Psoas muscle (tissue), 8 donors: ENCODE measurements at regions of chr7 and their contacts with region 1.

Region 1: DNA sequence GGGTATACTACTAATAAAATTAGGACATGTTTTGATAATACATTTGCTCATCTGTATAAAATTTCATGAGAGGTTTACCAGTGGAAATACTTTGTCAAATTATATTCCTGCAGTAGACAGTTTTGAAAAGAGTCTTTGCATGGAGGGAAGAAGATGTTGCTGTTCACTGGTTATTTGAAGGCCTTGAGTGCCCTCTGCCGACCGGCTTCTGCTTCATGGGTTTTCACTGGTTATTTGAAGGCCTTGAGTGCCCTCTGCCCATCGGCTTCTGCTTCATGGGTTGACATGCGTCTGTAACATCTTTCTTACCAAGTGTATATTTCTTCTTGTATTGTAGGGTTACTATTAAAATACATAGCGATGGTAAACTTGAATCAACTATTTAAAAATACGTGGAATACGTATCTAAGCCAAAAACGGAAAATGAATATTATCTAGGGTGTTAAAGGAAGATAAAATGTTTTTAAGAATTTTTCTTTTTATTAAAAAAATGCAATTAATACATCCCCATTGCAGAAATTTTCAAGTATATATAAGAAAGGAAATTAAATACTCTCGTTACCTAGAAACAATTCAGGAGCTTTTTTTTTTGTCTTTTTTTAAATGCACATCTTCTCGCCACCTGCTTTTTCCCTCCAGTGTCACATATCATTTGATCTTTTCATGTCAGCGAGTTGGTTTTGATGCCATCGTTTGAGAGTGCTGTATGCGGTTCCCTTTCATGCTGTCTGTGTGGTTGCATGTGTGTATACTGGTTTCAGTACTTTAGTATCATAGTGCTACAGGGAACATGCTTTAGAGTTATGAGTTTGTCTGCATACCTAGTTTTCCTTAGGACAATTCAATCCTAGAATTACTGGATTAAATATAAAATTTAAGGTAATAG is 73.4 kb downstream of the SHH start:
- DNase-seq: peak; percentile 73 to 85
- ATAC-seq: peak; percentile 75 to 93 (median 83)
- H3K4me3 ChIP-seq: no peak overlapping the region
- H3K27ac ChIP-seq: no peak overlapping the region
- H3K4me1 ChIP-seq: peaks cover 4% of the 10 kb centered on the region
- H3K27me3 ChIP-seq: no peaks in the 10 kb centered on the region
- CTCF ChIP-seq: peak; percentile 71

Region 2: GRCh38 chr7:155644178-155644970 is 94.5 kb before region 1 on chr7 and contains the start of gene RBM33:
- intact Hi-C with region 1: loop called in 1 of 2 experiments (anchors 10 kb)
- DNase-seq: peak; percentile 79 to 86
- ATAC-seq: peak; percentile 91 to 94 (median 92)
- H3K4me3 ChIP-seq: peak within 1 kb of the TSS; percentile 99
- H3K27ac ChIP-seq: peak within 1 kb of the TSS; percentile 98
- H3K4me1 ChIP-seq: peaks cover 21% of the 10 kb centered on the region
- H3K27me3 ChIP-seq: no peaks in the 10 kb centered on the region
- CTCF ChIP-seq: no peak
- total RNA-seq, gene RBM33: 40.4 to 49.3 (median 43.7) TPM